Activated naive CD4-positive, alpha-beta T cell treated with anti-CD3 and anti-CD28 coated beads, Interleukin-2, amount 10 ng/mL, durations not matched to agents 7 days and 5 days (primary cell): ENCODE measurements at regions of chr17 and their contacts with region 1.

Region 1: GRCh38 chr17:75059369-75060345 is 12.6 kb downstream of the KCTD2 start:
- DNase-seq: no peak
- H3K4me3 Mint-ChIP-seq: no peak overlapping the region
- H3K27ac Mint-ChIP-seq: peak overlapping the region; percentile 66
- H3K4me1 Mint-ChIP-seq: peaks cover 32% of the 10 kb centered on the region
- H3K27me3 Mint-ChIP-seq: no peaks in the 10 kb centered on the region

Region 2: DNA sequence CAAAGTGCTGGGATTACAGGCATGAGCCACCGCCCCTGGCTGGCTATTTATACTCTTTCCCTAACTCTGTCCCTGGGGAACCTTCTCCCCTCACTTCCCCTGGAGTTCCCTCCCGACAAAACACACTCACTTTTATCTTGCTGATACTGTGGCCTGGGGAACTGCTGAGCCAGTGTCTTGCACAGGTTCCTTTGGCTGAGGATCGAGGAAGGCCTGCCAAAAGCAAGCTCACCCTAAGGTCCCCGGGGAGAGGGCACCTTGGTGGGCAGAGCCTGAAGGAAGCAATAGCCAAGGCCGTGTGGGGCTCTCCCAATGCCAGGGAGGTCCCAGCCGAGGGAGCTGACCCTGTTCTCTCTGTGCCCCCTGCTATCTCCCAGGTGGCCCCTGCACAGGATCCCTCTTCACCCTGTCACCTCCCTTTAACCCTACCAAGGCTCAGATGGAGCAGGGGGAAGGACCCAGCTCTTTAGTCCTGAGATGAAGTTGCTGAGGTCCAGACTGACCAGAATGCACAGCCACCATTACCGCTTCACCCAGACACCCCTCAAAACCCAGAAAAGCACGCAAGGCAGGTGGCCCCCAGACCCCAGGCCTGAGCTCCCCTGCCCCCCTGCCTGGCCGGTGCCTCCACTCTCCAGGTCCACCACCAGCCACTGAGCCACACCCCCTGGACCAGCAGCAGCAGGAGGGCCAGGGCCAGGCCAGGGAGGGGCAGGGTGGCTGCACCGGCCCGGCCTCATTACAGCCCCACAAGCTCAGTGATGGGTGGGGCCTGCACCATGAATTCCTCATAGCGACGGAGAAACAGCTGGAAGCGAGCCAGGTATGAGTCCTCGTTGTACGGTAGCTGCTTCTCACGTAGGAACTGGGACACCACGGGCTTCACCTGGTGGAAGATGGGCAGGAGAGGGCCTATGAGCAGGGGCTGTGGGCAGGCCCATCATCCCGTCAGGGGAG is 181.8 kb before region 1 on chr17:
- CTCF ChIA-PET with region 1: no interaction called
- DNase-seq: no peak
- H3K4me3 Mint-ChIP-seq: no peak overlapping the region
- H3K27ac Mint-ChIP-seq: no peak overlapping the region
- H3K4me1 Mint-ChIP-seq: peaks cover 22% of the 10 kb centered on the region
- H3K27me3 Mint-ChIP-seq: peaks cover 45% of the 10 kb centered on the region

Region 3: DNA sequence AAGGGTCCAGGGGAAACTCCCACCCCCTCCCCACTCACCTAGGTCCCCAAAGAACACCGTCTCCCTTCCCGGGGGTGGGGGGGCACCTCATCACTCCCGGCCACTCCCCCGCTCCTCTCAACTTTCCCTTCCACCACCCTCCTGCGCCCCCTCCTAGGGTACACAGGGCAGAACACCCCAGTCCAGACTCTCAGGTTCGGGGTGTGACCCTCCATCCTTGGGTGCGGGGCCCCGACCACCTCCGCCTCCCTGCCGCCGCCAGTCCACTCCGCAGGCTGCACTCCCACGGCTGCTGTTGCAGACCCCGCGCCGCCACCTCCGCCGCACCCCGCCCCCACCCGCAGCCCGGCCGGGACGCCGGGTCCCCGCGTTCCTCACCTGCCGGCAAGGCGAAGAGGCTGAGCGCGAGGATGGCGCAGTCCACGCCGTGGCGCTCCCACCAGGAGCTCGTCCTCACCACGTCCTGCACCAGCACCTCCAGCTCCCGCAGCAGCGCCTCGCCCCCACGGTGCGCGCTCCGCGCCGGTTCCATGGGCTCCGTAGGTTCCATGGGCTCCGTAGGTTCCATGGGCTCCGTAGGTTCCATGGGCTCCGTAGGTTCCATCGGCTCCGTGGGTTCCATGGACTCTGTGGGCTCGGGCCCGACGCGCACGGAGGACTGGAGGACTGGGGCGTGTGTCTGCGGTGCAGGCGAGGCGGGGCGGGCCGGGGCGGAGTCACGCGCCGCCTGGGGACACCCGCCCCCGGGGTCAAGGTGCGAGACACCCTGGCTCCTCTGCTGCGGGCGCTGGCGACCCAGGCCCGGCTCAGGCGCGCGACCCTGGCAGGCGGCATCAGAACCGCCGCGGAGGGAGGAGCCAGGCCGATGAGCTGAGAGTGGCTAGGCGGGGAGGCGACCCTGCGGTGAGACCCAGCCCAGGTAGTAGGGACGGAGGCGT is 166.4 kb before region 1 on chr17 and contains the start of gene FADS6:
- CTCF ChIA-PET with region 1: no interaction called
- DNase-seq: peak; percentile 32
- H3K4me3 Mint-ChIP-seq: peak within 1 kb of the TSS; percentile 37
- H3K27ac Mint-ChIP-seq: peak within 1 kb of the TSS; percentile 68
- H3K4me1 Mint-ChIP-seq: peaks cover 4% of the 10 kb centered on the region
- H3K27me3 Mint-ChIP-seq: peaks cover 82% of the 10 kb centered on the region

Region 4: DNA sequence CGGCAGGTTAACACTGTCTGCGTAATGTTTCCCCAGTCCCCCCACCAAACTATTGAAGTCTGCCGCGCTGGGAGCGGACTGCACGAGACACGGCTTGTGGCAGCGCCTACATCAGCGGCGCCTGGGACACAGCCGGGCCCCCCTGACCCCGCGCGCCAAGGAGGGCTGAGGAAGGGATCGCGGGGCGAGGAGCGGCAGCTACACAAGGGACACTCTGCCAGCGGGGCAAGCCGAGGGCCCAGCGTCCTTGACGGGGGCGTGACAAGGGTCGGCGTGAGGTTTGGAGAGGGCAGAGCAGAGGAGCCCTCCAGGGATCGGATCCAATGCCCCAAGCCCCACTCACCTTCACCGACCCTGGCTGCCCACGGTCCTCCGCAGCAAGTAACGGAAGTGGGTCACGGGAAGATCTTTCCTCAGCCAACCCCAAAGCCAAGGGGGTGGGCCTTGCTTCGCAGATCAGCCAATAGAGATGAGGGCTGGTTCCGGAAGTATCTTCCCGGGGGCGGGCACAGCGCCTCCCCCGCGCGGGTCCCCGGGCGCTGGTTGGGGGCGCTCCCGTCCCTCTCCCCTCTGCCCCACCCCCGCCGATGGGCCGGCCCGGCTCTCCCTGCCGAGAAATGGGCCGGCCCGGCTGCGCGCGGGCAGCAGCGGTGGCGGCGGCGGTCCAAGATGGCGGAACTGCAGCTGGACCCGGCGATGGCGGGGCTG is 12.9 kb before region 1 on chr17 and contains the starts of genes ATP5PD and KCTD2:
- CTCF ChIA-PET with region 1: interaction called, 10 read pairs
- DNase-seq: peak; percentile 97
- H3K4me3 Mint-ChIP-seq: peak within 1 kb of the TSS; percentile 97
- H3K27ac Mint-ChIP-seq: peak within 1 kb of the TSS; percentile 96
- H3K4me1 Mint-ChIP-seq: peaks cover 49% of the 10 kb centered on the region
- H3K27me3 Mint-ChIP-seq: peaks cover 3% of the 10 kb centered on the region

Region 5: DNA sequence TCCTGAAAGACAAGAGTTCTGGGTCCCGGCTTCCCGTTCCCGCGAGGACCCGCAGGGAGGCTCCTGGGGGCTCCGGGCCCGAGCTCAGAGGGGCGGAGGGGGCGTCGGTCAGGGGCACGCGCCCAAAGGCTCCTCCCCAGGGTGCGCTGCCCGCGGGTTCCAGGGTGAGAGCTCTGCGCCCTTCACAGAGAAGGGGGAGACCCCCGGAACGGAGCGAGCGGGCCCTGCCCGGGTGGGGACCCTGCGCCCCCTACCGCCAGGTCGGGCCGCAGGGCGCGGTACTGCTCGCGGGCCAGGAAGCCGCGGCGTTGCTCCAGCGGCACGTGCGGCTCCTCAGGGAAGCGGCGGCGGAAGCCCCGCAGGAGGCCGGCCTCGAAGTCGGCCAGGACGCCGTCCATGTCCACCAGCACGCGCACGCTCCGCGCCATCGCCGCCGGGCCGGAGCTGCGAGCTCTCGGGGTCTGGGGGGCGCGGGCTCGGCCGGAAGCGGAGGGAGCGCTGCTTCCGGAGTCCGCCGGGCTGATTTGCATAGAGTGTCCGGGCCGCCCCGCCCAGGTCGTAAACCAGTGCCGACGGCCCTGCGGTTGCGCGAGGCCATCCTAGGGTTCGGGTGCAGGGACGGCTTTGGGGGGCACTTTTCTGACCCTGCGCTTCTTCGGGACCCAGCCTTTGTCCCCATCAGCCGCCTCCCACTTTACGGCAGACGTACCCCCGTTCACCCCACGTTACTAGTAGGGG is 71.8 kb after region 1 on chr17 and contains the start of gene NT5C:
- CTCF ChIA-PET with region 1: interaction called, 14 read pairs
- DNase-seq: peak; percentile 81
- H3K4me3 Mint-ChIP-seq: peak within 1 kb of the TSS; percentile 88
- H3K27ac Mint-ChIP-seq: peak within 1 kb of the TSS; percentile 92
- H3K4me1 Mint-ChIP-seq: peaks cover 29% of the 10 kb centered on the region
- H3K27me3 Mint-ChIP-seq: no peaks in the 10 kb centered on the region

Region 6: GRCh38 chr17:75199886-75200618 is 140.4 kb after region 1 on chr17:
- CTCF ChIA-PET with region 1: interaction called, 25 read pairs
- DNase-seq: no peak
- H3K4me3 Mint-ChIP-seq: no peak overlapping the region
- H3K27ac Mint-ChIP-seq: no peak overlapping the region
- H3K4me1 Mint-ChIP-seq: peaks cover 12% of the 10 kb centered on the region
- H3K27me3 Mint-ChIP-seq: peaks cover 10% of the 10 kb centered on the region